CD8-positive, alpha-beta T cell (primary cell): ENCODE measurements at regions of chr16 and their contacts with region 1.

Region 1: DNA sequence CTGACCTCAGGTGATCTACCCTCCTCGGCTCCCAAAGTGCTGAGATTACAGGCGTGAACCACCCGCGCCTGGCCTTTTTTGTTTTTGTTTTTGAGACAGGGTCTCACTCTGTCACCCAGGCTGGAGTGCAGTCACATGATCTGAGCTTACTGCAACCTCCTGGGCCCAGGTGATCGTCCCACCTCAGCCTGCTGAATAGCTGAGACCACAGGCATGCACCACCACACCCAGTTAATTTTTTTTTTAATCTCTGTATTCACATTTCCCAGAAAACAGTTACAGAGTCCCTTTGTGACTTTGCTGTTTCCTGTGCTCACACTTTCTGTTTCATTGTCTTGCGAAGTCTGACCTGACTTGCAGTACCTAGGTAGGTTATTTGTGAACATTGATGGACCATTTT is 2.7 kb downstream of the CLUAP1 start:
- DNase-seq: peak in 8 of 9 experiments; percentile 19 to 77 (median 64)
- ATAC-seq: peak; percentile 22
- H3K4me3 ChIP-seq: peak overlapping the region in 1 of 2 experiments; percentile 45
- H3K4me3 Mint-ChIP-seq: peak overlapping the region; percentile 71
- H3K27ac ChIP-seq: peak overlapping the region; percentile 50 to 71
- H3K27ac Mint-ChIP-seq: peak overlapping the region; percentile 96
- H3K4me1 ChIP-seq: peaks cover 59% of the 10 kb centered on the region
- H3K4me1 Mint-ChIP-seq: peaks cover 66% of the 10 kb centered on the region
- H3K27me3 ChIP-seq: no peaks in the 10 kb centered on the region
- H3K27me3 Mint-ChIP-seq: no peaks in the 10 kb centered on the region
- CTCF ChIP-seq: no peak

Region 2: DNA sequence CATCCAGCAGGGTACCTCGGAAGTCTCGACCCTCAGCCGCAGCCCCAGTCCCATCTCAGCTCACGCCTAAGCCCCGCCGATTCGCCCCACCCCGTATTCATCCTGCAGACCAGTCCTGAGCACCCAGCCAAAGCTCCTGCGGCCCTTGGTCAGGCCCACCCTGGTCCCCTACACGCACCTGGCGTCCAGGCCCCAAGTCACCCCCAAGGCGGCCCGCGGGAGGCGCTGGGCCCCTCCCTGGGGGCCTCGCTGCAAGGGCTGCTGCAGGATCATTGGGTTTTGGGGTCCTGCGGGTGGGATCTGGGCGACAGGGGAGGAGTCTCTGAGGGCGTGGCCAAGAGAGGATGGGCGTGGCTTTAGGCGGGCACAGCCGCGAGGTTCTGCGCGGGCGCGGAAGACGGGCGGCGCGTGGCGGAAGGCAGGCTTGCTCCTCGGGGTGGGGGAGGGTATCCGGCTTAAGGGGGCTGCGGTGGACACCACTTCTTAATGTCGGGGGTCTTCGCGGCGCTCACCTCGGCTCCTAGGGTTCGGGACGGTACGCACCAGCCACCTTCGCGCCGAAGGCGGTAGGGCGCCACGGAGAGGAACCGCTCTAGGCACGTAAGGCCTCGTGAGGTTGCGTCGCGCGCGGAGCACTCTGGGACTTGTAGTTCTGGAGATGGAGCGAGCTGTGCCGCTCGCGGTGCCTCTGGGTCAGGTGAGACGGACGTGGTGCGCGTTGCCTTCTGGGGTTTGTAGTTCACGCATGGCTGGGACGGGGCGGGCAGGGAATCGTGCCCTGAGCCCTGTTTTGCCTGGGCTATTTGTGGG is 479.6 kb before region 1 on chr16 and contains the starts of genes HCFC1R1 and THOC6:
- CTCF ChIA-PET with region 1: no interaction called
- POLR2A ChIA-PET with region 1: interaction called, 3 read pairs
- intact Hi-C with region 1: loop called in 1 of 2 experiments (anchors 5 kb)
- DNase-seq: peak; percentile 88 to 98 (median 96)
- ATAC-seq: peak; percentile 73
- H3K4me3 ChIP-seq: peak within 1 kb of the TSS; percentile 88 to 90
- H3K4me3 Mint-ChIP-seq: peak within 1 kb of the TSS; percentile 95
- H3K27ac ChIP-seq: peak within 1 kb of the TSS; percentile 70 to 96
- H3K27ac Mint-ChIP-seq: peak within 1 kb of the TSS; percentile 95
- H3K4me1 ChIP-seq: peaks cover 65% of the 10 kb centered on the region
- H3K4me1 Mint-ChIP-seq: peaks cover 49% of the 10 kb centered on the region
- H3K27me3 ChIP-seq: peaks cover 0 to 3% of the 10 kb centered on the region in 2 experiments
- H3K27me3 Mint-ChIP-seq: peaks cover 3% of the 10 kb centered on the region
- CTCF ChIP-seq: no peak
- total RNA-seq, gene HCFC1R1: 6.4 to 7.1 TPM
- total RNA-seq, gene THOC6: 13.1 to 14.0 TPM

Region 3: DNA sequence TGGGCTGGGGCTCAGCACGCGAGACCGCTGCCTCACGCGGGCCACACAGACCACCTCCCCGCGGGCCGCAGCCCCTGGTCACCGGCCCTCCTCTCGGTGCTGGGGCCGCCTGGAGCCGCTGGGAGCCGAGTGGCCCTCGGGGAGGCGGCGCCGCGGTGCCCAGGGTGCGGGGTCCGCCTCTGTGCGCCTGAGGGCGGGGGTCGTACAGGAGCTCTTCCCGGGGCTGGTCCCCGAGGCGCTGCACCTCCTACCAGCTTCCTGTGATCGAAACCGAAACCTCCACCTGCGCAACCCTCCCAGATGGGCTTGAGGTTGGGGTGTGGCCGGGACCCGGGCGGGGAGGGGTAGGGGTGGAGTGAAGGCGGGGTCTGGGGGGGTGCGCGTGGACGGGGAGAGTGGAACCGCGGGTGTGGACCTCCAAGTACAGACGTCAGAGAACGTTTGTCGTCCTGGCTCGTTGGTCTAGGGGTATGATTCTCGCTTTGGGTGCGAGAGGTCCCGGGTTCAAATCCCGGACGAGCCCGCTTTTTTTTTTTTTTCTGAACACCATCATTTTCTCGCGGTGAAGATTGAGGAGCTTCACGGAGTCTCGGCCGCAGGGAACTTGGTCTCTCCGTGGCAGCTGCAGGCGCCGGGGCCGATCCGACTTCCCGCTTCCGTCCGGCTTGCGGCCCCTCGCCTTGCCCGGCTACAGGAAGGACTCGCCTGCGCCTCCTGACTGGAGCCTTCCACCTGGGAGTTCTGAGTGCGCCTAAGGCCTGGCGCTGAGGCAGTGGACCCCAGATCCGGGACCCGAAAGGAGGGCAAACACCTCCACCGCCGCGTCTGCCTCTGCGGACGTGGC is 344.8 kb before region 1 on chr16:
- CTCF ChIA-PET with region 1: no interaction called
- POLR2A ChIA-PET with region 1: no interaction called
- intact Hi-C with region 1: loop called (anchors 2 to 5 kb)
- DNase-seq: peak; percentile 91 to 98 (median 95)
- ATAC-seq: peak; percentile 91
- H3K4me3 ChIP-seq: peak overlapping the region; percentile 80 to 97
- H3K4me3 Mint-ChIP-seq: peak overlapping the region; percentile 90
- H3K27ac ChIP-seq: peak overlapping the region; percentile 70 to 78
- H3K27ac Mint-ChIP-seq: peak overlapping the region; percentile 94
- H3K4me1 ChIP-seq: peaks cover 23% of the 10 kb centered on the region
- H3K4me1 Mint-ChIP-seq: peaks cover 15% of the 10 kb centered on the region
- H3K27me3 ChIP-seq: no peaks in the 10 kb centered on the region
- H3K27me3 Mint-ChIP-seq: no peaks in the 10 kb centered on the region
- CTCF ChIP-seq: no peak

Region 4: GRCh38 chr16:3282730-3283524 is 220.6 kb before region 1 on chr16 and contains the start of gene ZNF263:
- CTCF ChIA-PET with region 1: no interaction called
- POLR2A ChIA-PET with region 1: interaction called, 5 read pairs
- intact Hi-C with region 1: loop called (anchors 1 to 5 kb)
- DNase-seq: peak; percentile 82 to 98 (median 92)
- ATAC-seq: peak; percentile 88
- H3K4me3 ChIP-seq: peak within 1 kb of the TSS; percentile 84 to 92
- H3K4me3 Mint-ChIP-seq: peak within 1 kb of the TSS; percentile 89
- H3K27ac ChIP-seq: peak within 1 kb of the TSS; percentile 96 to 100
- H3K27ac Mint-ChIP-seq: peak within 1 kb of the TSS; percentile 96
- H3K4me1 ChIP-seq: peaks cover 28% of the 10 kb centered on the region
- H3K4me1 Mint-ChIP-seq: peaks cover 56% of the 10 kb centered on the region
- H3K27me3 ChIP-seq: no peaks in the 10 kb centered on the region
- H3K27me3 Mint-ChIP-seq: no peaks in the 10 kb centered on the region
- CTCF ChIP-seq: no peak
- total RNA-seq, gene ZNF263: 44.2 to 49.0 TPM

Region 5: DNA sequence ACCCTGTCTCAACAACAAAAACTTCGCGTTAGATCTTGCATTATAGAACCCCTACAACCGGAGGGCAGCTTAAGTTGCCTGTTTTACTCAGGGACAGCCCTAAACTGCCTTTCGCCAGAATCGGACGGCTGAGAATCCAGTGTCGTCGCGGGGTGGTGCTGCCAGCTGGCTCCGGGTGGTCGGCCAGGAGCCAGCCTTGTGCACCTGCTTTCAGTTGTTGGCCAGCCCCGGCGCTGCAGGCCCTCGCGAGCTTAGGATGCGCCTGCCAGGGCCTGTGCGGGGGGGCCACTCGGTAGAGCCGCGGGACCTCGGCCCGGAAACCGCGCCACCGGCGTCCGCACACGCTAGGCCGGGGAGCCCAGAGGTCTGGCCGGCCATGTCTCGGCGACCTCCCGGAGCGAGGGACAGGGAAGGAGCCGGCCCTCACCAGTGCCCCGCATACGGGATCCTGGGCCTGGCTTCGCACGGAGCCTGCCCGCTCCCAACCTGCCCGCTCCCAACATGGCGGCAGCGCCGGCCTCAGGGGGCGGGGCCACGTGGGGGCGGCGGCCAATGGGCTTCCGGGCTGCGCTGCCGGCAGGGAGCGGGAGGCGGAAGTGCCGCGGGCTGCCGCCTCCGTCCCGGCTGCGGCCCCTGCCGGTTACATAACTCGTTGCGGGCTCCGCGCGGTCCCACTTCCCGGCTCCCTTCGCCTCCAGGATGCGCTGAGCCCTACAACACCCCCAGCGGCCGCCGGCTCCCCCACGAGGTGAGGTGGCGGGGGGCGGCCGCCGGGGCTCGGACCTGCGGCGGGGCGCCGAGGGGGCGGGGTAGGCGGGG is 45.9 kb before region 1 on chr16:
- CTCF ChIA-PET with region 1: interaction called, 7 read pairs
- POLR2A ChIA-PET with region 1: interaction called, 3 read pairs
- intact Hi-C with region 1: loop called (anchors 1 to 2 kb)
- DNase-seq: peak; percentile 78 to 96 (median 90)
- ATAC-seq: peak; percentile 84
- H3K4me3 ChIP-seq: peak overlapping the region; percentile 71 to 72
- H3K4me3 Mint-ChIP-seq: peak overlapping the region; percentile 85
- H3K27ac ChIP-seq: peak overlapping the region; percentile 76 to 89
- H3K27ac Mint-ChIP-seq: peak overlapping the region; percentile 93
- H3K4me1 ChIP-seq: peaks cover 42% of the 10 kb centered on the region
- H3K4me1 Mint-ChIP-seq: peaks cover 52% of the 10 kb centered on the region
- H3K27me3 ChIP-seq: no peaks in the 10 kb centered on the region
- H3K27me3 Mint-ChIP-seq: no peaks in the 10 kb centered on the region
- CTCF ChIP-seq: peak; percentile 49

Region 6: DNA sequence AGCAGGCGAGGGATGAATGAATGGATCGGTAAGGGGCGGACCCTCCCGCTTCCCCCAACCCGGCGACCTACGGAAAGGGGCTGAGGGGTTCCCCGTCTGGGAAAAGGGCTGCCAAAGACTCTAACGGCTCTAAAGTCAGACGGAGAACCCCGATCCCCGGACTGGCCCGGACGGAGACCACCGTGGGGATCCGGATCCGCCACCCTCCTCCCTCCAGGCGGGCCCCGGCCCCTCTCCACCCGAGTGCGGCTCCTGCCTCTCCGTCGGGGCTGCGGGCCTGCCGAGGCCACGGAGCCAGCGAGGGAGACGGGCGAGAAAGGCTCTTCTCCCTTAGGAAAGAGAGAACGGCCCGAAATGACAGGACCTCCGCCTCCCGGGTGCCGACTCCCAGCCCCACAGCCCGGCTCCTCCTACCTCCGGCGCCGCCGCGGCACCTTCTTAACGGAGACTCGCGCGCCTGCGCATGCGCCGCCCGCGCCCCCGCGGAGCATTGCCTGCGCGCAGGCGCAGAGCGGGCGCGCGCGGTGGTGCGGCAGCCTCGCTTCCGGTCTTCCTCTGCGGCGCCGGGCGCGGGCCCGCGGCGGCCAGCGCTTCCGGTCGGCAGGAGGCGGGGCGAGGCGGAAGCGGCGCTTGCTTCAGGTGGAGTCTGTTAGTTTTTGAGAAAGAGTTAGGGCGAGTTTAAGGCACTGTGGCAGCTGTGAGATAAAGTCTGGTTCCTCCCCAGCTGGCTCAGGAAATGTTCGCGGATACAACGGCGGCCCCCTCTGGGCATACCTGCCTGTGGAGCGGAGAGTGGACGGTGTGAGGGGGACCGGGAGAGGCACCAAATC is 107.8 kb after region 1 on chr16 and contains the start of gene SLX4:
- CTCF ChIA-PET with region 1: interaction called, 3 read pairs
- POLR2A ChIA-PET with region 1: no interaction called
- intact Hi-C with region 1: loop called in 1 of 2 experiments (anchors 1 kb)
- DNase-seq: peak; percentile 79 to 98 (median 91)
- ATAC-seq: peak; percentile 87
- H3K4me3 ChIP-seq: peak within 1 kb of the TSS; percentile 80 to 96
- H3K4me3 Mint-ChIP-seq: peak within 1 kb of the TSS; percentile 99
- H3K27ac ChIP-seq: peak within 1 kb of the TSS; percentile 78 to 89
- H3K27ac Mint-ChIP-seq: peak within 1 kb of the TSS; percentile 99
- H3K4me1 ChIP-seq: peaks cover 26% of the 10 kb centered on the region
- H3K4me1 Mint-ChIP-seq: peaks cover 49% of the 10 kb centered on the region
- H3K27me3 ChIP-seq: no peaks in the 10 kb centered on the region
- H3K27me3 Mint-ChIP-seq: no peaks in the 10 kb centered on the region
- CTCF ChIP-seq: no peak
- total RNA-seq, gene SLX4: 5.1 to 5.2 TPM

Region 7: GRCh38 chr16:3807425-3808123 is 304.1 kb after region 1 on chr16:
- CTCF ChIA-PET with region 1: no interaction called
- POLR2A ChIA-PET with region 1: no interaction called
- intact Hi-C with region 1: no loop called
- DNase-seq: no peak
- ATAC-seq: no peak
- H3K4me3 ChIP-seq: no peak overlapping the region
- H3K4me3 Mint-ChIP-seq: peak overlapping the region; percentile 32
- H3K27ac ChIP-seq: no peak overlapping the region
- H3K27ac Mint-ChIP-seq: no peak overlapping the region
- H3K4me1 ChIP-seq: peaks cover 74% of the 10 kb centered on the region
- H3K4me1 Mint-ChIP-seq: peaks cover 83% of the 10 kb centered on the region
- H3K27me3 ChIP-seq: no peaks in the 10 kb centered on the region
- H3K27me3 Mint-ChIP-seq: no peaks in the 10 kb centered on the region
- CTCF ChIP-seq: no peak

Region 8: GRCh38 chr16:4693296-4693955 is 1189.9 kb after region 1 on chr16 and contains the start of gene NUDT16L1:
- CTCF ChIA-PET with region 1: no interaction called
- POLR2A ChIA-PET with region 1: no interaction called
- intact Hi-C with region 1: loop called in 1 of 2 experiments (anchors 5 kb)
- DNase-seq: peak; percentile 94 to 99 (median 97)
- ATAC-seq: peak; percentile 90
- H3K4me3 ChIP-seq: peak within 1 kb of the TSS; percentile 85 to 97
- H3K4me3 Mint-ChIP-seq: peak within 1 kb of the TSS; percentile 88
- H3K27ac ChIP-seq: peak within 1 kb of the TSS; percentile 68 to 93
- H3K27ac Mint-ChIP-seq: peak within 1 kb of the TSS; percentile 89
- H3K4me1 ChIP-seq: peaks cover 30% of the 10 kb centered on the region
- H3K4me1 Mint-ChIP-seq: peaks cover 13% of the 10 kb centered on the region
- H3K27me3 ChIP-seq: no peaks in the 10 kb centered on the region
- H3K27me3 Mint-ChIP-seq: no peaks in the 10 kb centered on the region
- CTCF ChIP-seq: no peak
- total RNA-seq, gene NUDT16L1: 72.9 to 76.5 TPM